ENCODE measurements at regions of chr11 and their contacts with region 1.

Region 1: DNA sequence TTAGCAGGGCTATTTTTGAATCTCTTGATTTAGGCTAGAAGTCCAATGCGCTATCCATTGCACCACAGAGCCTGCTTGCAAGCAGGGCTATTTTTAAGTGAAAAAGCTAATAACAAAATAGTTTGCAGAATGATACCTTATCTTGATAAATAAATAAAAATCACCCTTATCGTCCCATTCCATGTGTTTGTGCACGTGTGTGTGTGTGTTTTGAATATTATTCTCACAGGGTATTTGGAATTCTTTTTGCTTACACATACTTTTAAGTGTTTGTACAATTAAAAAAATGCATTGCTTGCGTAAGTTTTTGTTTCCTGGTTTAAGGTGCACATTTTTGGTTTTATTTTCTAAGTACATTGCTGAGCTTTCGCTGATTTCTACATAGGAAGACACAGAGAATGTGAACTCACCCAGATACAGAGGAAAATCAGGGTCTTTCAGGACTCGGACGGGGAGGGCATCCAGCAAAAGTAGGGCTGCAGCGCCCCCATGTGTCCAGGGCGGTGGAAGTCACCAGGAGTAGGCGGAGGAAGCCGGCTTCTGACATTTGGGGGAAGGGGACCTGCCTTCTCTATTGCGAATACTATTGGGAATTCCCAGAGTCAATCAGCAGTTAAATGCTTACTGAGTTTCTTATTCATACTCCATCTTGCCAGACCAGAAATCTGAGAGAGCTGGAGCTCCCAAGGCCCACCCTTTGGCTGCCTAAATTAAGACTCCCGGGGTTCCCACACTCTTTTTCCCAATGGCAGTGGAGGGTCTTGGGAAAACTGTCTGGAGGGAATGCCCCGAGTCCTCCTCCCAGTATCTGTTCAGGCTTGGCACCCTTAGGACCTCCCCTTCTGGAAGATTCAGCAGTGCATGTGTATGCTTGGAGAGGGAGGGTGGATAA is 27.2 kb downstream of the SLC1A2 start:
- DNase-seq: peak; percentile 88
- H3K4me3 ChIP-seq: peak overlapping the region; percentile 28
- H3K27ac ChIP-seq: peak overlapping the region; percentile 8; the same call in 1 of the 2 replicates
- H3K4me1 ChIP-seq: peaks cover 16% of the 10 kb centered on the region
- H3K27me3 ChIP-seq: no peaks in the 10 kb centered on the region

Region 2: GRCh38 chr11:34997952-34998528 is 394.1 kb before region 1 on chr11:
- in situ Hi-C with region 1: loop called (anchors 10 kb)
- DNase-seq: peak; percentile 70
- H3K4me3 ChIP-seq: peak overlapping the region; percentile 12
- H3K27ac ChIP-seq: peak overlapping the region; percentile 21
- H3K4me1 ChIP-seq: peaks cover 25% of the 10 kb centered on the region
- H3K27me3 ChIP-seq: no peaks in the 10 kb centered on the region

Region 3: GRCh38 chr11:36123346-36124101 is 731.4 kb after region 1 on chr11:
- in situ Hi-C with region 1: no loop called
- DNase-seq: no peak
- H3K4me3 ChIP-seq: no peak overlapping the region
- H3K27ac ChIP-seq: no peak overlapping the region
- H3K4me1 ChIP-seq: peaks cover 4% of the 10 kb centered on the region; the same call in 1 of the 2 replicates
- H3K27me3 ChIP-seq: no peaks in the 10 kb centered on the region

Region 4: DNA sequence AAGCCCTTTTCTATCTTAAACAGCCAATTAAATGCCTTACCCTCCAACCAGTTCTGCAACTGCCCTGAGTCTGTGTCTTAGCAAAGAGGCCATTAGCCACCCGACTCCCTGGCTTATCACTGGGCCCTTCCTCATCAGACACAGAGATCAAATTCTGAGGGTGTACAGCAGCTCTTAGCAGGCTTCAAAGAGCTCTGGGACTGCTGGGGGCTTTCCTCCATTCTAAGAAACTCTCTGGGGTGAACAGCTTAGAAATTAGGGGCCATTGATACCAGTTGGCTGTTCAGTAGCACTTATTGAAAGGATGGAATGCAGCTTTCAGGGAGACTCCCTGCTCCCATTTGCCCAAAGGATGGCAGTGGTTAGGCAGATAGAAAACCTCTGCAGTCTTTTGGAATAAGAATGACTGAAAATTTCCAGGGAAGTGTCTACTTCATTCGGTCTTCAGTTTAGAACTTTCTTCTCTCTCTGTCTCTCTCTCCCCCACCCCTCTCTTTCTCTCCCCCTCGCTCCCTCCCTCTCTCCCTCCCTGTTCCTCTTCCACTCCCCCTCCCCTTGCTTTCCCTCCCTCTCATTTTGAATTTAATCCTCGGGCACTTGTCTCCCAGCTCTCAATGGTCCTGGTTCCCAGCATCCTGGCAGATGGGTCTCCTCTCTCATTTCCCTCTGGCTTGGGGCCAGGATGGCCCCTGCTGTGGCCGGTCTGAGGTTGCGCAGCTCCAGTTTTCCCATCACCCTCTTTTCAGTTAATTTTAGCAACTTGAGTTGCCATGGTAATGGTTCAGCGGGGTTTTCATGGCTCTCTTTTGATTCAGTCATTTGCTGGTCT is 820.6 kb after region 1 on chr11:
- in situ Hi-C with region 1: no loop called
- DNase-seq: no peak
- H3K4me3 ChIP-seq: no peak overlapping the region
- H3K27ac ChIP-seq: no peak overlapping the region
- H3K4me1 ChIP-seq: no peaks in the 10 kb centered on the region
- H3K27me3 ChIP-seq: no peaks in the 10 kb centered on the region